Activated T-helper 1 cell treated with anti-CD3 and anti-CD28 coated beads, Interleukin-12 subunit alpha, Interleukin-12 subunit beta, Interleukin-2, Interleukin-4 antibody, amounts not matched to agents 30 ng/mL and 10 ng/mL and 1 ng/mL, durations not matched to agents 14 hours and 24 hours and 36 hours (primary cell): ENCODE measurements at regions of chr10 and their contacts with region 1.

Region 1: GRCh38 chr10:13231808-13232207 is 2.4 kb downstream of the UCMA start:
- DNase-seq: no peak
- H3K4me3 Mint-ChIP-seq: no peak overlapping the region
- H3K27ac Mint-ChIP-seq: no peak overlapping the region
- H3K4me1 Mint-ChIP-seq: no peaks in the 10 kb centered on the region
- H3K27me3 Mint-ChIP-seq: peaks cover 5% of the 10 kb centered on the region

Region 2: GRCh38 chr10:13160934-13161856 is 70.6 kb before region 1 on chr10 and contains the start of gene MCM10:
- intact Hi-C with region 1: no loop called
- DNase-seq: peak; percentile 98
- H3K4me3 Mint-ChIP-seq: peak within 1 kb of the TSS; percentile 93
- H3K27ac Mint-ChIP-seq: peak within 1 kb of the TSS; percentile 94
- H3K4me1 Mint-ChIP-seq: peaks cover 57% of the 10 kb centered on the region
- H3K27me3 Mint-ChIP-seq: no peaks in the 10 kb centered on the region
- total RNA-seq, gene MCM10: 104 and 106 TPM in 2 replicates

Region 3: GRCh38 chr10:13263591-13263990 is 31.8 kb after region 1 on chr10:
- intact Hi-C with region 1: loop called (anchors 2 kb)
- DNase-seq: no peak
- H3K4me3 Mint-ChIP-seq: no peak overlapping the region
- H3K27ac Mint-ChIP-seq: no peak overlapping the region
- H3K4me1 Mint-ChIP-seq: no peaks in the 10 kb centered on the region
- H3K27me3 Mint-ChIP-seq: peaks cover 19% of the 10 kb centered on the region